Caco-2 (cell line): ENCODE measurements at regions of chr14 and their contacts with region 1.

Region 1: GRCh38 chr14:90114550-90114949 is 52.8 kb downstream of the KCNK13 start:
- DNase-seq: peak; percentile 19 to 42
- H3K4me3 ChIP-seq: no peak overlapping the region
- H3K4me3 Mint-ChIP-seq: no peak overlapping the region
- H3K27ac Mint-ChIP-seq: no peak overlapping the region
- H3K4me1 ChIP-seq: no peaks in the 10 kb centered on the region
- H3K4me1 Mint-ChIP-seq: no peaks in the 10 kb centered on the region
- H3K27me3 ChIP-seq: no peaks in the 10 kb centered on the region; the same call in 1 of the 2 replicates
- H3K27me3 Mint-ChIP-seq: peaks cover 9% of the 10 kb centered on the region
- CTCF ChIP-seq: peak in 1 of 2 experiments; percentile 36

Region 2: DNA sequence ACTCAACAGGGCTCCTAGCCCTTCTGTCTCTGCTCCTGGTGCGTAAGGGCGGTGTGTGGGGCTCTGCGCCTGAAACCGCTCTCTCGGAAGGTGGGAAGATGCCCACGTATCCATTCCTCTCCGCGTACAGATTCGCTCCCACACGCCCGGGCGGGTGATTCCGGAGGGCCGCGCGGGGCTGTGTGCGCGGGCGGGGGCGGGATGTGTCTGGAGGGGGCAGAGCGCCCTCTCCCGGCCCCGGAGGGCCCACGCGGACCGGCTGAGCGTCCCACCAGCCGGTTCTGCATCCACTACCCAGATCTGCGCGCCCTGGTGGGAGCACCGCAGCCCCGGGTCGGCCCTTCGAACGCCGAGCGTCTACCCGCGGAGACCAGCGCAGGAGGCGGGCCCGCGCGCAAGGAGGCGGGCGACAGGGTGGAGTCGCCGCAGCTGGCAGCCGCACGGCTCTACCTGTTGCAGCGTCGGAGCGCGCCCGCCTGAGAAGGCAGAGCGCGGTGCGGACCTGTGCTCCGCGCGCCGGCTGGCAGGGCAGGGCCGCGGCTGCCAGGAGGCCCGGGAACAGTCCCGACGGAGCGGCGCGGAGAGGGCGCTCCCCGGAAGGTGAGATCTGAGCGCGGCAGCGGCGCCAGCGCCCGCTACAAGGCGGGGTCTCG is 54.1 kb before region 1 on chr14:
- CTCF ChIA-PET with region 1: no interaction called
- POLR2A ChIA-PET with region 1: no interaction called
- intact Hi-C with region 1: no loop called
- DNase-seq: peak; percentile 52 to 66
- H3K4me3 ChIP-seq: peak overlapping the region; percentile 32
- H3K4me3 Mint-ChIP-seq: peak overlapping the region; percentile 85
- H3K27ac Mint-ChIP-seq: no peak overlapping the region
- H3K4me1 ChIP-seq: peaks cover 8% of the 10 kb centered on the region; the same call in 1 of the 2 replicates
- H3K4me1 Mint-ChIP-seq: peaks cover 10% of the 10 kb centered on the region
- H3K27me3 ChIP-seq: peaks cover 5% of the 10 kb centered on the region
- H3K27me3 Mint-ChIP-seq: peaks cover 32% of the 10 kb centered on the region
- CTCF ChIP-seq: peak; percentile 44 to 46

Region 3: GRCh38 chr14:90184571-90185266 is 70.2 kb after region 1 on chr14:
- CTCF ChIA-PET with region 1: no interaction called
- POLR2A ChIA-PET with region 1: no interaction called
- intact Hi-C with region 1: loop called (anchors 2 kb)
- DNase-seq: peak in 1 of 2 experiments; percentile 20
- H3K4me3 ChIP-seq: no peak overlapping the region
- H3K4me3 Mint-ChIP-seq: no peak overlapping the region
- H3K27ac Mint-ChIP-seq: no peak overlapping the region
- H3K4me1 ChIP-seq: no peaks in the 10 kb centered on the region
- H3K4me1 Mint-ChIP-seq: no peaks in the 10 kb centered on the region
- H3K27me3 ChIP-seq: no peaks in the 10 kb centered on the region
- H3K27me3 Mint-ChIP-seq: peaks cover 18% of the 10 kb centered on the region
- CTCF ChIP-seq: no peak